ENCODE measurements at regions of chr9 and their contacts with region 1.

Region 1: GRCh38 chr9:88578121-88579054 is 43.4 kb downstream of the NXNL2 start:
- DNase-seq: peak; percentile 84
- ATAC-seq: peak; percentile 93 to 94

Region 2: DNA sequence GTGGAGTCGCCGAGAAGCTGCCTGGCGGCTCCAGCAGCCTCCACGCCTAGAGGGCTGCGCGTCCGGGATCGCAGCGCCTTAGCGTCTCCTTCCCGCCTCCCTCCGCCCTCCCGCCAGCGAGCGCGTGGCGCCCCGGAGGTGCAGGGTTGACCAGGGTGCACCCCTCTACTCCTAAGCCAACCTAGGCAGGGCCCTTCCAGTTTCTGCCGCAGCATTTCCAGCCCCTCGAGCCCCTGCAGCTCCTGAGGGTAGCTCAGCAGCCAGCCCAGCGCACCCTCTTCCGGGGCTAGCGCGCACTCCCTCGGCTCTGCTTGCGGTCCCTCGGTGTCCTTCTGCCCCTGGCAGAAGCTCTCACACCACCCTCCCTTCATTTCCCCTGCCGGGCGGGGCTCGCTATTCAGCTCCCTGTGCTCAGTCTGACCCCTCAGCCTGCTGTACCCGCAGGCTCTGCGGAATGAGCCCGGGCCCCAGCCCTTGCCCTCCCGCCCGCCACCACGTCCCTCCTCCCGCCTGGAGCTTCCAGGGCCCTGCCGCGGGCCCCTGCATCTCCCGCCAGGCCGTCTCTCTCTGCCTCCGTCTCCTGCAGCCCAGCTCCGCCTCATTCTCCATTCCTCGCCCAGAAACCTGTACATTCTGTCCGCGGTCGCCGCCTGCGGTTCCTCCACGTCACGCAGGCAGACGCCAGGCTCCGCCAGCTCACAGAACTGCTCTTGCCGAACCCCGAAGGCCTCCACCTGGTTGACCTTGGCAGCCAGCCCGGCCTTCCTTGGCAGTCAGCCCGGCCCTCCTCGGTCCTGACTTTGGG is 501.9 kb before region 1 on chr9:
- intact Hi-C with region 1: loop called in 1 of 2 experiments (anchors 10 kb)
- DNase-seq: peak; percentile 71
- ATAC-seq: peak; percentile 92 to 94

Region 3: DNA sequence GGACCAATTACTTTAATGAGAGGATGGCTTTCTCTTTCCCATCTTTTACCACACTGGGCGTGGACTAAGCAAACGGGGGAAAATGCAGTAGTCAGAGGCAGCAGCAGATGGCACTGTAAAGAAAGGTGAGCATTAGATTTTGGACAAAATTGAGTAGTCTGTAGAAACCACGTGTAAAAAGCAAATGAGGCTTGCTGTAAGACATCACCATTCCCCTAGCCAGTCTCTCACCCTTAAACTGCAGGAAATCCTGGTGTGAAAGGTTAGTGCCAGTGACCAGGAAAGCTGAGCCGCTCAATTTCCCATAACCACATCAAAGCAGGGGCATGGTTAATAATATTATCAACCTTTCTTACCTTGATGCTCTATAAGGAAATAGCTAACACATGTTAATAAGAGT is 471.9 kb before region 1 on chr9:
- intact Hi-C with region 1: loop called in 1 of 2 experiments (anchors 2 kb)
- DNase-seq: no peak
- ATAC-seq: peak in 1 of 2 donors; percentile 53

Region 4: DNA sequence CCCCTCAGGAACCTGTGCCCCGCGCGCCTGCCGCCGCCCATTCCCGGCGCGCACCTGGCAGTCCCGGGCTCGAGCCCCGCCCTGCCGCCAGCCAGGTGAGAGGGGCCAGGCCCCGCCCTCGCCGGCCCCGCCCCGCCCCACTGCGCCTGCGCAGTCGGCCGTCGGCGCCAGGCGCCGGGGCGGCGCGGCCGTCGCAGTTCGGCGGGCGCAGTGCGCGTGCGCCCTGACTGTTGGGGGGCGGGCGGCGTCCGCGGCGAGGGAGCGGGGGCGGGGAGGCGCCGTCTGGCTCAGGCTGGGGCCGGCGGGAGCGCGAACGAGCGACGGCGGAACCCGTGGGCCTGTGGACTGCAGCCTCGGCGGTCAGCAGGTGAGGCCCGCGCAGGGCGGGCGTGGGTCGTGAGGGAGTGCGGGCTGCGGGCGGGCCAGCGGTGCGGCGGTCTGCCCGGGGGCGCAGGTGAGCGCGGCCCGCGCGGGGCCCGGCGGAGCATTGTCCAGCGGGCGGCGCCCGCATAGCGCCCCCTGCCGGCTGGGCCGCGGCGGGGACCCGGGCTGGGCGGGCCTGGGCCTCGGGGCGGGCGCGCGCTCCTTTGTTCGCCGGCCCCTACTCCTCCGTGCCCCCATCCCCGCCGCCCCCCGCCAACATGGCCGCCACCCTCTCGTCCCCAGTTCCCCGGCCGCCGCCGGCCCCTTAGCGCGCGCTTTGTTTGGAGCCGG is 190.1 kb before region 1 on chr9 and contains the start of gene SPIN1:
- intact Hi-C with region 1: no loop called
- DNase-seq: peak; percentile 83
- ATAC-seq: peak; percentile 90 to 91
- total RNA-seq, gene SPIN1: 55.6 to 56.3 TPM